ENCODE measurements at regions of chr11 and their contacts with region 1.

Region 1: GRCh38 chr11:92357344-92357743 is 132.7 kb downstream of the FAT3 start:
- DNase-seq: no peak
- H3K4me3 ChIP-seq: no peak overlapping the region
- H3K27ac ChIP-seq: no peak overlapping the region
- H3K4me1 ChIP-seq: 0 out of 7 replicates have a peak, but pooled peaks cover 0 to 2% (median 0%) of the 10 kb centered on the region in 4 experiments
- H3K27me3 ChIP-seq: no peaks in the 10 kb centered on the region
- CTCF ChIP-seq: no peak
- EP300 ChIP-seq: no peak
- POLR2A ChIP-seq: no peak
- RAD21 ChIP-seq: no peak

Region 2: DNA sequence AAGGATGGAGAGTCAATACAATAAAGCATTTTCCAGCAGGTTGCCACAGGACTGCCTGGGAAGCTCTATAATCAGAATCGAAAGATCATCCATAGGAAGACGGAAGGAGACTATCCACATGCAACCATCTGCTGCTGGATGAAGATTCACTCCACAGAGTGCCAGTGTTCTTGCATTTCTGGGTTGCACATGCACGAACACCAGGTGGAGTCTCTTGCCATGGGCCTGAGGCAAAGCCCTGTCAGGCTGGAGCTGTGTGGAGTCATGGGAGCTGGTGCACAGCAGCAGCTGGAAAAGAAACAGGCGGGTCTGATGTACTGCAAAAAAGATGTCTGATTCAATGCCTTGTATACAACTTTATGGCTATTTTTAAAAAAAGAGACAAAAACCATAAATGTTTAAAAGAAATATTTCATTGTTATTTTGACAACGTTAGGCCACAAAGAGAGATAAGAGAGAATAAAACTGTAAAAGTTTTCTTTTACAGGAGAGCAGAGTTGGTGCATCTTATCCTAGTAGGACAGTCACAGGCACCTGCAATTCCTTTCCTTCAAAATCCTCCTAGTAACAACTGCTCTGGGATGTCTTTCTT is 145.7 kb before region 1 on chr11:
- CTCF ChIA-PET with region 1: no interaction called
- POLR2A ChIA-PET with region 1: no interaction called
- DNase-seq: no peak
- H3K4me3 ChIP-seq: no peak overlapping the region
- H3K27ac ChIP-seq: no peak overlapping the region
- H3K4me1 ChIP-seq: peaks cover 0 to 4% (median 2%) of the 10 kb centered on the region in 4 experiments; a peak in 5 of 7 replicates
- H3K27me3 ChIP-seq: no peaks in the 10 kb centered on the region
- CTCF ChIP-seq: peak; percentile 50 to 62 (median 58)
- EP300 ChIP-seq: no peak
- POLR2A ChIP-seq: no peak
- RAD21 ChIP-seq: peak; percentile 71 to 82

Region 3: DNA sequence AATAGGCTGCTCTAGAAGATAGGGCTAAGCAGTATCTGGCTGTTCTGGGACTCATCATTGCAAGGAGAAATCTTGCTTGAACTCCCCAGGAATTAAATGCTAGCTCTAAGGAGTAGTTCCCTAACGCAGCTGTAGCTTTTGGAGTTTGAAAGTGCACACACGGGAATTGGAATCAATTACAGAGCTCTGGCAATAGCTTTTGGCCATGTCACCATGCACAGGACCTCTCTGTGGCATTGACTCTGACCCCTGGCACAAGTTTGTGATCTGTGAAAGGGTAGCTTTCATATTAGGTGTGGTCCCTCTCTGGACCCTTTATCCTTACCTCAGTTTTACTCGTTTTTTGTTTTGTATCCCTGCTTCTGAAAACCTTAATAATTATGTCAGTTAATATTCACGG is 11.1 kb before region 1 on chr11:
- CTCF ChIA-PET with region 1: interaction called, 21 read pairs
- POLR2A ChIA-PET with region 1: no interaction called
- DNase-seq: no peak
- H3K4me3 ChIP-seq: no peak overlapping the region
- H3K27ac ChIP-seq: no peak overlapping the region
- H3K4me1 ChIP-seq: peaks cover 4 to 14% (median 7%) of the 10 kb centered on the region in 4 experiments; a peak in 6 of 7 replicates
- H3K27me3 ChIP-seq: no peaks in the 10 kb centered on the region
- CTCF ChIP-seq: no peak
- EP300 ChIP-seq: no peak
- POLR2A ChIP-seq: no peak
- RAD21 ChIP-seq: no peak